Panc1 (cell line): ENCODE measurements at regions of chr10 and their contacts with region 1.

Region 1: GRCh38 chr10:97072851-97073665 is 112.7 kb downstream of the SLIT1 start:
- DNase-seq: peak; percentile 75
- ATAC-seq: peak; percentile 87
- H3K4me3 ChIP-seq: no peak overlapping the region
- H3K27ac ChIP-seq: no peak overlapping the region
- H3K4me1 ChIP-seq: no peaks in the 10 kb centered on the region; the same call in 1 of the 2 replicates
- H3K27me3 ChIP-seq: no peaks in the 10 kb centered on the region
- CTCF ChIP-seq: peak; percentile 99

Region 2: DNA sequence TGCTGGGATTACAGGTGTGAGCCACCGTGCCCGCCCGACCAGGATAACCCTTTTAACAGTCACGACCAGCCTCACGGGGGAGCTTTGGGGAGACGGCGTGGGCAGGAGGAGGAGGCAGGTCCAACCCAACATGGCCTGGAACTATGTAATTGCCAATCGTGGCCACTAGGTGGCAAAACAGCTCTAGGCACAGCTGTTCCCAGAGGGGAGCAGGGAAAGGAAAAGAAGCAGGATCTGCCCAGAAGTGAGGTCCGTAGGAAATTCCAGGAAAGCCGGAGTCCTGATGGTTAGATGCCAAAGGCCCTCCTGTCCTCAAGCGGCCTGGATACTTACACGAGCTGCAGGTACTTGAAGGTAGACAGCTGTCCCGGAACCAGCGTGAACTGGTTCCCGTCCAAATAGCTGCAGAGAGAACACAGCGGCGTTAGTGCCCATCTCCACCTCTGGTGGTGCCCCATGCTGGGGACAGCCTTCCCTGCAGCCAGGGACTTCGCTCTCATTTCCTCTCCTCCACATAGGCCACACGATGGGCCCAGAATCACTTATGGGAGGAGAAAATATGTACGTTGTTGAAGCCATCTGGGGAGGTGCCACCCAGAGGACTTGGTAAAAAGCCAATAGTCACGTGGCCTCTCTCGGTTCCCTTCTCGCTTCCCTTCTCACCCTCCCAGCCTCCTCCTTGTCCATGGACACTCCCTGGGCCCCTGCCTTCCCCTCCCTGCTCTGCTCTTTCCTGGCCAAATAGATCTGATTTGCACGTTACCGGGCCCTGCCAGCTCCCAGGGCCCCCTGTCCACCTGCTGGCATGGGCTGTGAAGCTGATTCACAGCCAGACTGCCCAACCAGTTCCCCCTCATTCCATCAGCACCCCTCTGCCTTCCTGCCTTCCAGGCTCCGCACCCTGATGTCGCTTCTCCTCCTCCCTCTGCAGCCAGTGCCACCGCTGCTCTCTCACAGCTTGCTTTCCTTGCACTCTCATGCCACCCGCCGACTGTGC is 35.4 kb before region 1 on chr10:
- CTCF ChIA-PET with region 1: interaction called, 18 read pairs
- POLR2A ChIA-PET with region 1: no interaction called
- in situ Hi-C with region 1: no loop called
- intact Hi-C with region 1: no loop called
- DNase-seq: peak; percentile 84
- ATAC-seq: peak; percentile 97
- H3K4me3 ChIP-seq: peak overlapping the region; percentile 26 to 53
- H3K27ac ChIP-seq: 0 out of 2 replicates have a peak overlapping the region, but pooled peaks have one; percentile 8
- H3K4me1 ChIP-seq: 0 out of 2 replicates have a peak, but pooled peaks cover 6% of the 10 kb centered on the region
- H3K27me3 ChIP-seq: no peaks in the 10 kb centered on the region
- CTCF ChIP-seq: peak; percentile 98

Region 3: GRCh38 chr10:97117372-97117771 is 44.3 kb after region 1 on chr10:
- CTCF ChIA-PET with region 1: interaction called, 11 read pairs
- POLR2A ChIA-PET with region 1: interaction called, 4 read pairs
- in situ Hi-C with region 1: no loop called
- intact Hi-C with region 1: loop called (anchors 2 kb)
- DNase-seq: peak; percentile 5
- ATAC-seq: peak; percentile 47; the same call in 1 of the 2 replicates
- H3K4me3 ChIP-seq: no peak overlapping the region
- H3K27ac ChIP-seq: no peak overlapping the region
- H3K4me1 ChIP-seq: no peaks in the 10 kb centered on the region
- H3K27me3 ChIP-seq: peaks cover 8% of the 10 kb centered on the region; the same call in 1 of the 2 replicates
- CTCF ChIP-seq: no peak; the same call in 1 of the 2 replicates

Region 4: DNA sequence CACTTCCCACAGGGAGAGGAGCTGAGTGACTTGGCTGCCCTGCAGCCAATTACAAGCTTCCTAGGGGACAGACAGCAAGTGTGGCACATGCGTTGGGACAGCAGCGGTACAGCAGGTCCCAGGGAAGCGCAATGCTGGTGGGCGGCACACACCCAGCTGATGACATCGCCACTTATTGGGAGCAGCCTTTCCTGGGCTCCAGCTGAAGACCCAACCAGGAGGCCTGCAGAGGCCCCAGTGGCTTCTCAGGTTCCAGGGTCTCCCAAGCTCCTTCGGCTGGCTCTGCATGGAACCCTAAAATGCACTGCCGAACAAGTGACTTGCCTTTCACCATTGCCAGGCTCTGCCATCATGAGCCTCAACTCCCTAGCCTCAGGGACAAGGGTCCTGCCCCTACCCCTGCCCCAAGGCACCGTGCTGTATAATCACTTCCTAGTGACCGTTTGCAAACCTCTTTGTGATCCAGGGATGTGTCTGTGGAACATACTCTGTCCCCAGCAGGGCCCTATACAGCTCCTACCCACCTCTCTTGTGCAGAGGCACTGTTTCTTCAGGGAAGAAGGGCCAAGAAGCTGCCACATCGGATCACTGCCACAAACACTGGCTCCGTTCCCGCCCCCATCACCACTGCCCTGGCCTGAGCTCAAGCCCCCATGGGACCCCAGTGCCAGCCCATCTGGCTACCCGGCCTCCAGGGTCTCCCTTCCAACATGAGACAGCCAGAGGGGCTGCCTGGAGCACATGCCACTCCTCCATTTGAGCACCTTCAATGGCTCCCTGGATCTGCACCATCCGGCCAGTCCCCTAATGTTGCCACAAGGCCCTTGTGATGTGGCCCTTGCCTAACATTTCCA is 132.0 kb after region 1 on chr10:
- CTCF ChIA-PET with region 1: interaction called, 51 read pairs
- POLR2A ChIA-PET with region 1: interaction called, 5 read pairs
- in situ Hi-C with region 1: no loop called
- intact Hi-C with region 1: loop called (anchors 1 kb)
- DNase-seq: no peak
- ATAC-seq: no peak
- H3K4me3 ChIP-seq: no peak overlapping the region
- H3K27ac ChIP-seq: no peak overlapping the region
- H3K4me1 ChIP-seq: peaks cover 4% of the 10 kb centered on the region; the same call in 1 of the 2 replicates
- H3K27me3 ChIP-seq: no peaks in the 10 kb centered on the region
- CTCF ChIP-seq: no peak

Region 5: GRCh38 chr10:98045785-98046389 is 972.8 kb after region 1 on chr10:
- CTCF ChIA-PET with region 1: no interaction called
- POLR2A ChIA-PET with region 1: no interaction called
- in situ Hi-C with region 1: no loop called
- intact Hi-C with region 1: no loop called
- DNase-seq: peak; percentile 53
- ATAC-seq: peak; percentile 86
- H3K4me3 ChIP-seq: no peak overlapping the region
- H3K27ac ChIP-seq: no peak overlapping the region
- H3K4me1 ChIP-seq: no peaks in the 10 kb centered on the region
- H3K27me3 ChIP-seq: peaks cover 25% of the 10 kb centered on the region
- CTCF ChIP-seq: peak; percentile 99